ENCODE measurements at regions of chr2 and their contacts with region 1.

Region 1: DNA sequence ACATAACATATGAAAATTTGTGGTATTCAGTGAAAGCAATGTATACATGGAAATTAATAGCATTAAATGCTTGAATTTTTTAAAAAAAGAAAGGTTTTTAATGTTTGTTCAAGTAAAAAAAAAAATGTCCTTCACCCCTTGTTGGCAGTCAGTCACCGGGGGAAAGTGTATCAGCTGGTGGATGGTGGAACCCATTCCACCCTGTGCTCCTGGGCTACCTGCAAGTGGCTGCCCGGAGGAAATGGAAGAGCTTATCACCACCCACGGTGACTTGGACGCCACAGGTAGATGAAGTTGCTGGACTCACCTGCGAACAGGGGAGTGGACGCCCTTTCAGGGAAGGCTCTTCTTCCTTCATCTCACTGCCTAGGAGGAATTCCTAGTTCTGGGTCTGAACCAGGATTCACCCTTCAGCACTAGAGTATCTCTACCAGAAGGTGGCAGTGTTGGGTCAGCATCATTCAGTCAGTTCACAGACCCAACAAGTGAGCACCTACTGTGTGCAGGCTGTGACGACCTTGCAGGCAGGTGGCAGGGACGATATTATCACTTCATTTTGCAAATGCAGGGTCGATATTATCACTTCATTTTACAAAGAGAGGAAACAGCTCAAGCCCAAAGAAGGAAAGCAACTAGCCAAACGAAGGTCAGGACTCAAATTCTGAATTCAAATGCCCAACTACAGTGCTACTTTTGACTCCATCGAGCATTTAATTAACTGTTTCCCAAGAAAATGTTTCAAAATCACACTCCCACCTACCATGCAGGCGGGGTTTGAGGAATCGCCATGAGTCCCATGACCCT is 35.8 kb downstream of the CIB4 start:
- DNase-seq: peak; percentile 48

Region 2: GRCh38 chr2:26587994-26588393 is 17.4 kb before region 1 on chr2:
- intact Hi-C with region 1: no loop called
- DNase-seq: peak; percentile 8

Region 3: GRCh38 chr2:26745609-26746327 is 140.4 kb after region 1 on chr2:
- intact Hi-C with region 1: loop called (anchors 2 kb)
- DNase-seq: peak; percentile 95

Measured in posterior vena cava (tissue), 2 donors.